ENCODE measurements at regions of chr6 and their contacts with region 1.

Region 1: GRCh38 chr6:109073344-109074132 is 21.1 kb downstream of the SESN1 start:
- DNase-seq: peak; percentile 76
- ATAC-seq: peak; percentile 65
- H3K4me3 ChIP-seq: no peak overlapping the region
- H3K27ac ChIP-seq: no peak overlapping the region
- H3K4me1 ChIP-seq: peaks cover 2% of the 10 kb centered on the region; the same call in 1 of the 2 replicates
- H3K27me3 ChIP-seq: no peaks in the 10 kb centered on the region
- CTCF ChIP-seq: peak; percentile 75
- POLR2A ChIP-seq: no peak
- RAD21 ChIP-seq: peak; percentile 83

Region 2: GRCh38 chr6:108541838-108542759 is 531.4 kb before region 1 on chr6:
- CTCF ChIA-PET with region 1: interaction called, 18 read pairs
- POLR2A ChIA-PET with region 1: no interaction called
- dilution Hi-C with region 1: loop called (anchors 25 kb)
- in situ Hi-C with region 1: loop called (anchors 5 kb)
- intact Hi-C with region 1: loop called (anchors 1 kb)
- DNase-seq: peak; percentile 87
- ATAC-seq: peak; percentile 86
- H3K4me3 ChIP-seq: no peak overlapping the region
- H3K27ac ChIP-seq: no peak overlapping the region
- H3K4me1 ChIP-seq: peaks cover 10% of the 10 kb centered on the region
- H3K27me3 ChIP-seq: no peaks in the 10 kb centered on the region
- CTCF ChIP-seq: peak; percentile 91
- POLR2A ChIP-seq: peak; percentile 47; the same call in 1 of the 2 replicates
- RAD21 ChIP-seq: peak; percentile 100

Region 3: GRCh38 chr6:108782179-108783041 is 291.1 kb before region 1 on chr6:
- CTCF ChIA-PET with region 1: no interaction called
- POLR2A ChIA-PET with region 1: no interaction called
- dilution Hi-C with region 1: no loop called
- in situ Hi-C with region 1: no loop called
- intact Hi-C with region 1: loop called (anchors 1 kb)
- DNase-seq: peak; percentile 81
- ATAC-seq: peak; percentile 88
- H3K4me3 ChIP-seq: peak overlapping the region; percentile 53
- H3K27ac ChIP-seq: peak overlapping the region; percentile 71
- H3K4me1 ChIP-seq: peaks cover 9% of the 10 kb centered on the region
- H3K27me3 ChIP-seq: no peaks in the 10 kb centered on the region
- CTCF ChIP-seq: peak; percentile 82
- POLR2A ChIP-seq: no peak
- RAD21 ChIP-seq: peak; percentile 84

Region 4: GRCh38 chr6:108896111-108896661 is 177.4 kb before region 1 on chr6:
- CTCF ChIA-PET with region 1: interaction called, 4 read pairs
- POLR2A ChIA-PET with region 1: interaction called, 3 read pairs
- dilution Hi-C with region 1: no loop called
- in situ Hi-C with region 1: loop called (anchors 10 kb)
- intact Hi-C with region 1: loop called (anchors 1 kb)
- DNase-seq: peak; percentile 92
- ATAC-seq: peak; percentile 83
- H3K4me3 ChIP-seq: no peak overlapping the region
- H3K27ac ChIP-seq: peak overlapping the region; percentile 98
- H3K4me1 ChIP-seq: peaks cover 13% of the 10 kb centered on the region
- H3K27me3 ChIP-seq: no peaks in the 10 kb centered on the region
- CTCF ChIP-seq: no peak
- POLR2A ChIP-seq: no peak
- RAD21 ChIP-seq: no peak

Region 5: DNA sequence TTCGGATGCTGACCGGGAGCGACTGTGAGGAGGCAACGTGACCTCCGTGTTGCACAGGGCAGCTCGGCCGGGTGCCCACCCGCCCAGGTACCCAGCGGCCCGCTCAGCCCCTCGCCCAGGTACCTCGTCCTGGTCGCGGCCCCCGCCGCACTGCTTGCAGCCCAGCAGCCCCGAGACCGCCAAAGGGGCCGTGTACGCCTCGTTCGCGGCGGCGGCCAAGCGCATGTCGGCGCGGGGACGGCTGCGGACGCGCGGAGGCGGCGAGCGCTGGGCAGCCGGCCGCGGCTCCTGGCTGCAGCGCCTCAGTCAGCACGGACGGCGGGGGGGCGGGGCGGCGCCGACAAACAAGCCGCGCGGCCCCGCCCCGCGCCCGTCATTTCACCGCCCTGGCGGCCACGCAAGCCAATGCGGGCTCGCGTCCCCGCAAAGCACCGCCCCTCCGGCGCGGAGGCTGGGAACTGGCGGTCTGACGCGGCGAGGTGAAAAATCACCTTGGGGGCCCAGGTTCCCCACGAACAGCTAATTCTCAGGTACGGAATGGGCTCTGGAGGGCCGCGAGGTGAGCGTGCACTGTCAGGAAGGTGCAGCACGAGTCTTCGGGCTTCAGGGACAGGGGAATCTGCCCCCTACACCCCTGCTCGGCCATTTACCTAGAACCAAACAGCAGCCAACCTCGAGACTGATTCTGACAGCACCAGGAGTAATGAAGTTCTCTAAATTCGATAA is 64.1 kb before region 1 on chr6:
- CTCF ChIA-PET with region 1: no interaction called
- POLR2A ChIA-PET with region 1: no interaction called
- dilution Hi-C with region 1: no loop called
- in situ Hi-C with region 1: no loop called
- intact Hi-C with region 1: loop called (anchors 5 kb)
- DNase-seq: peak; percentile 82
- ATAC-seq: peak; percentile 100
- H3K4me3 ChIP-seq: peak overlapping the region; percentile 91
- H3K27ac ChIP-seq: peak overlapping the region; percentile 79
- H3K4me1 ChIP-seq: no peaks in the 10 kb centered on the region
- H3K27me3 ChIP-seq: no peaks in the 10 kb centered on the region
- CTCF ChIP-seq: no peak
- POLR2A ChIP-seq: no peak
- RAD21 ChIP-seq: no peak

Region 6: GRCh38 chr6:110573136-110573920 is 1499.8 kb after region 1 on chr6:
- CTCF ChIA-PET with region 1: no interaction called
- POLR2A ChIA-PET with region 1: no interaction called
- dilution Hi-C with region 1: no loop called
- in situ Hi-C with region 1: no loop called
- intact Hi-C with region 1: no loop called
- DNase-seq: peak; percentile 34
- ATAC-seq: no peak
- H3K4me3 ChIP-seq: no peak overlapping the region
- H3K27ac ChIP-seq: no peak overlapping the region
- H3K4me1 ChIP-seq: no peaks in the 10 kb centered on the region
- H3K27me3 ChIP-seq: no peaks in the 10 kb centered on the region
- CTCF ChIP-seq: no peak
- POLR2A ChIP-seq: no peak
- RAD21 ChIP-seq: no peak

Measured in IMR-90 (cell line).